HepG2 (cell line): ENCODE measurements at regions of chr12 and their contacts with region 1.

Region 1: GRCh38 chr12:112924986-112925385 is 13.3 kb upstream of the OAS3 start:
- DNase-seq: peak; percentile 56
- ATAC-seq: peak; percentile 78
- H3K4me3 ChIP-seq: peak overlapping the region in 2 of 3 experiments; percentile 9 to 50; a peak in 3 of 6 replicates
- H3K27ac ChIP-seq: no peak overlapping the region
- H3K4me1 ChIP-seq: peaks cover 38% of the 10 kb centered on the region
- H3K27me3 ChIP-seq: no peaks in the 10 kb centered on the region
- CTCF ChIP-seq: no peak
- EP300 ChIP-seq: peak in 1 of 2 experiments; percentile 22; a peak in 1 of 4 replicates
- POLR2A ChIP-seq: no peak
- RAD21 ChIP-seq: no peak

Region 2: GRCh38 chr12:112906712-112907414 is 18.1 kb before region 1 on chr12 and contains the start of gene OAS1:
- CTCF ChIA-PET with region 1: no interaction called
- POLR2A ChIA-PET with region 1: interaction called, 34 read pairs
- in situ Hi-C with region 1: no loop called
- intact Hi-C with region 1: no loop called
- DNase-seq: peak; percentile 72
- ATAC-seq: peak; percentile 98
- H3K4me3 ChIP-seq: peak within 1 kb of the TSS; percentile 54 to 68 (median 68)
- H3K27ac ChIP-seq: peak within 1 kb of the TSS; percentile 45
- H3K4me1 ChIP-seq: peaks cover 32% of the 10 kb centered on the region
- H3K27me3 ChIP-seq: no peaks in the 10 kb centered on the region
- CTCF ChIP-seq: no peak
- EP300 ChIP-seq: no peak
- POLR2A ChIP-seq: peak; percentile 32 to 34; a peak in 1 of 4 replicates
- RAD21 ChIP-seq: no peak
- total RNA-seq, gene OAS1: 6.5 and 7.5 TPM in 2 replicates

Region 3: DNA sequence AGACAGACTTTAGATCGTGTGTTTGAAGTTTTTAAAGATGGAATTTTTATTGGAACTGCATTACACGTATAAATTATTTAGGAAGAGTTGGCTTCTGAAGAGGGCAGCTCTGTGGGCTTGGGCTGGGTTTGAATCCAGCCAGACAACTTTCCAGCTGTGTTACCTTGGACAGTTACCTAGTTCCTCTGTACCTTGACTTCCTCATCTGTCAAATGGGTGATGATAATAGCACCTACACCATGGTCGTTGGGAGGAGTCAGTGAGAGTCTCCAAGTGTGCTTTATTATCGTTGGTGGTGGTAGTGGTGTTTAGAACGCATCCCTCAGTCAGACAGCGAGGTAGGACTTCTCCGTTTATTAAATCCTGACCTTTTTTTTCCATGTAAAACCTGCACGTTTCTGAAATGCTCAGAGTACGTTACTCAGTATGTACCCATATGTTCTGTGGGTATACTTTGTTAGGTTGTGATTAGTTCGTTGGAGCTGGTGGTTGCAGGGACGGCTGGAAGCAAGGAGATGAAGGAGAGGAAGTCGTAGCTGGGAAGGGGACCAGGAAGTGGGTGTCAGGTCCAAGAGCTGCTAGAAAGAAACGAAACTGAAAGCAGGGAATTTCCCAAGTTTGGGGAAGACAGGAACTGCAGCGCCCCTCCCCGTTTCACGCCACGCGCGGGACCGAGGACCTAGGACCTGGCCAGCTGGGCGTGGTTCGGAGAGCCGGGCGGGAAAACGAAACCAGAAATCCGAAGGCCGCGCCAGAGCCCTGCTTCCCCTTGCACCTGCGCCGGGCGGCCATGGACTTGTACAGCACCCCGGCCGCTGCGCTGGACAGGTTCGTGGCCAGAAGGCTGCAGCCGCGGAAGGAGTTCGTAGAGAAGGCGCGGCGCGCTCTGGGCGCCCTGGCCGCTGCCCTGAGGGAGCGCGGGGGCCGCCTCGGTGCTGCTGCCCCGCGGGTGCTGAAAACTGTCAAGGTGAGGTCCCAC is 13.0 kb after region 1 on chr12 and contains the start of gene OAS3:
- CTCF ChIA-PET with region 1: no interaction called
- POLR2A ChIA-PET with region 1: interaction called, 19 read pairs
- in situ Hi-C with region 1: no loop called
- intact Hi-C with region 1: no loop called
- DNase-seq: peak; percentile 77
- ATAC-seq: peak; percentile 90
- H3K4me3 ChIP-seq: peak within 1 kb of the TSS; percentile 76 to 86 (median 81)
- H3K27ac ChIP-seq: peak within 1 kb of the TSS; percentile 49
- H3K4me1 ChIP-seq: peaks cover 28% of the 10 kb centered on the region
- H3K27me3 ChIP-seq: no peaks in the 10 kb centered on the region; a peak in 1 of 5 replicates
- CTCF ChIP-seq: peak; percentile 52
- EP300 ChIP-seq: no peak
- POLR2A ChIP-seq: peak in 1 of 2 experiments; percentile 54
- RAD21 ChIP-seq: peak; percentile 11; the same call in 1 of the 2 replicates
- total RNA-seq, gene OAS3: 10.5 and 16.7 TPM in 2 replicates